ENCODE measurements at regions of chr7 and their contacts with region 1.

Region 1: DNA sequence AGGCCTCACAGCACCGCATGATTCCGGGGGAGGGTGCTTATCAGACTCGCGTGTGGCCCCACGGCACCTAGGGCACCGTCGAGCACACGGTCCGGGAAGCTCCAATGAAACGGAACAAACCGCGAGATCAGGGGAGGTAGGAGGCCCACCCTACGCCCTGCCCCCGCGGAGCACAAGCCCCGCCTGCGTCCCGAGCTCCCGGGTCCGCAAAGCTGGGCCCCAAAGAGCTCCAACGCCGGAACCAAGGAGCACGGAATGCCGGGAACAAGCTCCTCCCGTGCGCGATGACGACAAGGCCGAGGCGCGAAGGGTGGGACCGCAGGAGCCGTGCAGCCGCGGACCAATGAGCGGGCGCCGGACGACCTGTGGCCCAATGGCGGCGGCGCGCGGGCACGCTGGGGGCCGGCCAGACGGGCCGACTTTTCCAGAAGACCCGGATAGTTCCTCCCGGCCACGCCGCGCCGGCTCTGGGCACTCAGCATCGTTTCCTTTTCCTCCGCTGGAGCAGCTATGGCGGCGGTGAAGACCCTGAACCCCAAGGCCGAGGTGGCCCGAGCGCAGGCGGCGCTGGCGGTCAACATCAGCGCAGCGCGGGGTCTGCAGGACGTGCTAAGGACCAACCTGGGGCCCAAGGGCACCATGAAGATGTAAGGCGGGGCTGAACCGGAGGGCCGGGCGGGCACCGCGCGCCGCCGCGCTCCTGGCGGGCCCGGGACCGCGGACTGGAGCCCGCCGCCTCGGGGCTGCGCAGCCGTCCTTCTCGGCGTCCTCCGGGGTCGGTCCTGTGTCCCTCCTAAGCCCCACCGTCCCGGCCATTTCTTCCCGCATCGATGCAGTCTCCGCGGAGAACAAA is at the starts of genes CCT6A and PSPH:
- DNase-seq: peak; percentile 99
- ATAC-seq: peak; percentile 100
- total RNA-seq, gene CCT6A: 67.9 TPM
- total RNA-seq, gene PSPH: 10.6 TPM

Region 2: DNA sequence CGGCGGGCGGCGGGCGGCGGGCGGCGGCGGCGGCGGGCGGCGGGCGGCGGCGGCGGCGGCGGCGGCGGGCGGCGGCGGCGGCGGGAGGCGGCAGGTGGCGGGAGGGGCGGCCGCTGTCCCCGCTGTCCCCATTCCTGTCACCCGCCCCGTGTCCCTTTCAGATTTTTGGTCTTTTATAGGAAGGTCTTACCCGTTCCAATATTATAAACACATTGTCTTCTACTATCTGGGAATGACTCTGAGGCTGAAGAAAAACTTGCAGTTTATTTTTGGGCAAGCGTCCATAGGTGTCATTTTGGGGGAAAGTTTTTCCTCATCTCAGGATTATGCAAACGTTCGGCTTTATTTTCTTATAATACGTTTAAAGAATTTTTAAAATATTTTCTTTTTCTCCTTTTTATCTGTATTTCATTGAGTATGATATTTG is 163.7 kb before region 1 on chr7:
- intact Hi-C with region 1: loop called (anchors 5 kb)
- DNase-seq: no peak
- ATAC-seq: no peak

Region 3: DNA sequence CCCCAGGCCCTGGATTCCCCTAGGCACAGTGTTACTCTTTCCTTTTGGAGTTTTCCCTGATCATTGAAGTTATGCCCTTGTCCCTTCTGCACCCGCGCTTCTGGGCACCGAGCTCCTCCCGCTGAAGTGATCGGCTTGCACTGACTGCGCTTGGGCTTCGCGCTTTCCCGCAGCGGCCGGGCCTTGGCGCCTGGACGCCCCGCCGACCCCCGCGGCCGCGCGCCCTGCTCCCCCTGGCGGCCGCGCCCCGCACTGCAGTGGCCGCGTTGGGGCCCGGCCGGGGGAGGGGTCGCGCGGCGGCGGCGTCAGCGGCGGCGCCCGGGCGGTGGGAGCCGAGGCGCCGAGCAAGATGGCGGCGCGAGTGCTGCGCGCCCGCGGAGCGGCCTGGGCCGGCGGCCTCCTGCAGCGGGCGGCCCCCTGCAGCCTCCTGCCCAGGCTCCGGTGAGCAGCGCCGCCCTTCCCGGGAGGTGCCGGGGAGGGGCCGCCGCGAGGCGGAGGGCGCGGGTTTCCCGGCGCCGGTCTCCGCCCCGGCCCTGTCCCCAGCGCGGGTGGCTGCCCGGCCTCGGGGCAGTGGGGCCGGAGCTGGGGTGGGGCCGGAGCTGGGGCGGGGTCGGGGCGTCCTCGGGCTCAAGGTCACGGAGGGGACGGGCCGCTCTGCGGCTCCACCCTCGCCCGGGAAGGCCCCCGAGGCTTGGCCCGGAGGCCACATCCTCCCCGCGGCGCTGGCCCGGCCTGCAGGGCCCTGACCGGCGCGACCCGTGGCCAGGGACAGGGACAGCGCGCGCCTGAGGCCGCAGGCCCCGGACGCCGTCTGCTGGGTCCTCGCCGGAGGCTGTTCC is 87.1 kb before region 1 on chr7 and contains the start of gene NIPSNAP2:
- intact Hi-C with region 1: loop called (anchors 5 kb)
- DNase-seq: peak; percentile 92
- ATAC-seq: peak; percentile 96
- total RNA-seq, gene NIPSNAP2: 348 TPM

Region 4: DNA sequence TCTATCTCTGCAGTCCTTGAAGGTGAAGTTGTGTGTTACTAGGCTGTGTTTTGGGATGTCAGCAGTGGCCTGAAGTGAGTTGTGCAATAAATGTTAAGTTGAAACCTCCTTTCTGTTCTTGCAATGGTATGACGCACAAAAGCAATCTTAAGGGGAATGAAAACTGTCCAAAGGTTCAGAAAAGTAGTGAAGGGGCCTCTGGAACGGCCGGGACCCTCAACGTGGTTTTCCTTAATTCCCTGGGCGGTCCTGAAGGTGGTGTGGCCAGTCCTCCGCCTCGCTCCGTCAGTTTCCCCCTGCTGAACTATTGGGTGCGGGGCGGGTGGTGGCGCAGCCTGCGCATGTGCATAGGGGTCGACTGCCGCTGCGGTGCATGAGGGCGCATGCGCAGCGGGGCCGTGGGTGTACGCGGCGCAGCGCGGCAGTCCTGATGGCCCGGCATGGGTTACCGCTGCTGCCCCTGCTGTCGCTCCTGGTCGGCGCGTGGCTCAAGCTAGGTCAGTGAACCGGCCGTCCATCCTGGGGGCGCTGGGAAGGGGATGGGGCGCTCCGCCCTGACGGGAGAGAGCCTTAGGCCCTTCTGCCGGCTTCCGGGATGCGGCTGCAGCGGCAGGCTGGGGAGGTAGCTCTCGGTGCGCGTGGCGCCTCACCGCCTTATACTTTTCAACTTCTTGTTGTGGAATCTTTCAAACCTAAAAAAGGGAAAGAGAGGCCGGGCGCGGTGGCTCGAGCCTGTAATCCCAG is 12.5 kb after region 1 on chr7 and contains the start of gene SUMF2:
- intact Hi-C with region 1: loop called (anchors 1 kb)
- DNase-seq: peak; percentile 96
- ATAC-seq: peak; percentile 100
- total RNA-seq, gene SUMF2: 33.1 TPM

Region 5: GRCh38 chr7:56106108-56107073 is 54.8 kb after region 1 on chr7 and contains the start of gene CHCHD2:
- intact Hi-C with region 1: loop called (anchors 5 kb)
- DNase-seq: peak; percentile 98
- ATAC-seq: peak; percentile 100
- total RNA-seq, gene CHCHD2: 493 TPM

Region 6: DNA sequence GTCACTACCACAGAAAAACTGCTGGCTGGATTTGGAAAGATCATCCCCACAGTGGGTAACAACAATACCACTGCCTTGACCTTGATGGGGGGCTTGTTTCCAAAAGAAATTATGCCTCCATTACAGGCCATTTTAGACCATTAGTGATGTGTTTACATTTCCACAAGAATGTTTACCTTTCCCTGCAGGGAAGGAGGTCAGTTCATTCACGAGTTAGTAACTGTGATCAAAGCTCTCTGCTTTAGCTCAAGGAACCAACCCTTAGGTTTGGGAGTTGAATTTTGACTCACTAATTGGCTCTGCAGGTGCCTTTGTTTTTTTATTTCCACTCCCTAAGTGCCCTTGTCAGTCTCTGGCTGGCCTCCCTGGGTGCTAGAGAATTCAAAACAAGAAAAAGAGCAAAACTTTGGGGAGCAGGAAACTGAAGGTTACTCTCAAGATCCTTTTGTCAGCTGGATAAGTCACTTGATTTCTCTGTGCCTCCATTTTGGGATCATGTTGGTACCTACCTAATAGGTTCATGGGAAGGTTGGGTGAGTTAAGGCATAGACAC is 105.7 kb after region 1 on chr7:
- intact Hi-C with region 1: no loop called
- DNase-seq: no peak
- ATAC-seq: no peak